Sciatic nerve (tissue), 2 donors: ENCODE measurements at regions of chr7 and their contacts with region 1.

Region 1: GRCh38 chr7:31633894-31634494 is 53.0 kb upstream of the PPP1R17 start:
- DNase-seq: no peak
- ATAC-seq: peak; percentile 69

Region 2: DNA sequence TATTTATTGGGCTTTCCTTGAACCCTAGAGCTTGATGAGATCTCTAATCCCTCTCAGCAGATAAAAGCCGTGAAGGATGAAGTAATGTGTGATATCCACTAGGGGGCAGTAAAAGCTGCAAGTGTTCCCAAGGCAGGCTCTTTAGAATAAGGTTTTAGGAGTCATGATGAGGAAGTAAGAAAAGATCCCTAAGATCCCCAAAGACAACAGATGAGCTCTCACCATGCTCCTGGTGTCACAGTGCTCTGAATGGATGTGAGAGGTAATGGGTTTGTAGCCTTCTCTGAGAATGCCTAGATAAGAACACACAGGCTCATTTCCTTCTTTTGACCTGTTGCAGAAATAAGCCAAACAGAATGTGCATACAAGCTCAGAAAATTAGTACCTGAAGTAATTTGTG is 190.5 kb before region 1 on chr7:
- intact Hi-C with region 1: loop called (anchors 10 kb)
- DNase-seq: no peak
- ATAC-seq: peak; percentile 63